Activated CD4-positive, alpha-beta memory T cell treated with anti-CD3 and anti-CD28 coated beads, Interleukin-2, amount 10 ng/mL, durations not matched to agents 7 days and 5 days (primary cell): ENCODE measurements at regions of chr6 and their contacts with region 1.

Region 1: GRCh38 chr6:5832668-5833067 is 174.1 kb downstream of the NRN1 start:
- DNase-seq: no peak
- H3K4me3 Mint-ChIP-seq: no peak overlapping the region
- H3K27ac Mint-ChIP-seq: peak overlapping the region; percentile 93
- H3K4me1 Mint-ChIP-seq: peaks cover 31% of the 10 kb centered on the region
- H3K27me3 Mint-ChIP-seq: peaks cover 2% of the 10 kb centered on the region

Region 2: GRCh38 chr6:5261545-5262109 is 571.0 kb before region 1 on chr6:
- CTCF ChIA-PET with region 1: no interaction called
- POLR2A ChIA-PET with region 1: no interaction called
- DNase-seq: no peak
- H3K4me3 Mint-ChIP-seq: peak overlapping the region; percentile 99
- H3K27ac Mint-ChIP-seq: peak overlapping the region; percentile 96
- H3K4me1 Mint-ChIP-seq: peaks cover 64% of the 10 kb centered on the region
- H3K27me3 Mint-ChIP-seq: no peaks in the 10 kb centered on the region

Region 3: DNA sequence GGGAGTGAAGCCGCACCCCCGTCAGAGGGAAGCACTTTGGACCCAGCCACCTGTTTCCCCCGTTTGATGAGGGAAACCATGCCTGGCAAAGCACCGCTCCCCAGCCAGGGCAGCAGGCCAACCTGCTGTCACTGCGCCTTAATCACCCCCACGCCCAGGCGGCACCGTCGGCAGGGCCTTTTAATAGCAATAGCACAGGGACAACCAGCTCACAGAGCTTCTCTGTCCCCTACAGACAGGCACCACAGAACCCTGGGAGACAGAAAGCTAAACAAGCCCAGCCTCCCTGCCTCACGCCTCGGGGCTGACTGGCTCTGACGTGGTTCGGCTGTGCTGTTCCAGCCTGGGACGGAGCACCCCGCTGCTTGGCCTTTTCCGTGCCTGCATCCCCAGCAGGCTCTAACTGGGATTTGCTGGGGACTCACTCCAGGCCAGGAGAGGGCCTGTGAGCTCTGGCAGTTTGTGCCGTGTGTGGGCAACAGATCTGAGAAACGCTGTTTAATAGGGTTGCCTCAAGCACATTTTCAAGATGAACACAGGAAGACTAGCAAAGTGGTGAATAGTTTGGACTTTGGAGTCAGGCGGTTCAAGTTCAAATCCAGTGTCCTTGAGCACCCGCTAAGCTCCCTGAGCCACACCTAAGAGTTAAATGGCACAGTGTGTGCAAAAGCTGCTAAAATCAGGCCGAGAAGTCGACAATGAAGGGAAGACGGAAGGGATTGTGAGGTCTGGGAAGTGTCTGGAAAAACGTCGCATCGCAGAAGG is 49.7 kb before region 1 on chr6:
- CTCF ChIA-PET with region 1: no interaction called
- POLR2A ChIA-PET with region 1: no interaction called
- DNase-seq: no peak
- H3K4me3 Mint-ChIP-seq: no peak overlapping the region
- H3K27ac Mint-ChIP-seq: no peak overlapping the region
- H3K4me1 Mint-ChIP-seq: no peaks in the 10 kb centered on the region
- H3K27me3 Mint-ChIP-seq: no peaks in the 10 kb centered on the region

Region 4: GRCh38 chr6:5869676-5870075 is 37.0 kb after region 1 on chr6:
- CTCF ChIA-PET with region 1: no interaction called
- POLR2A ChIA-PET with region 1: interaction called, 10 read pairs
- DNase-seq: no peak
- H3K4me3 Mint-ChIP-seq: no peak overlapping the region
- H3K27ac Mint-ChIP-seq: peak overlapping the region; percentile 48
- H3K4me1 Mint-ChIP-seq: peaks cover 51% of the 10 kb centered on the region
- H3K27me3 Mint-ChIP-seq: peaks cover 4% of the 10 kb centered on the region